ENCODE measurements at regions of chr5 and their contacts with region 1.

Region 1: DNA sequence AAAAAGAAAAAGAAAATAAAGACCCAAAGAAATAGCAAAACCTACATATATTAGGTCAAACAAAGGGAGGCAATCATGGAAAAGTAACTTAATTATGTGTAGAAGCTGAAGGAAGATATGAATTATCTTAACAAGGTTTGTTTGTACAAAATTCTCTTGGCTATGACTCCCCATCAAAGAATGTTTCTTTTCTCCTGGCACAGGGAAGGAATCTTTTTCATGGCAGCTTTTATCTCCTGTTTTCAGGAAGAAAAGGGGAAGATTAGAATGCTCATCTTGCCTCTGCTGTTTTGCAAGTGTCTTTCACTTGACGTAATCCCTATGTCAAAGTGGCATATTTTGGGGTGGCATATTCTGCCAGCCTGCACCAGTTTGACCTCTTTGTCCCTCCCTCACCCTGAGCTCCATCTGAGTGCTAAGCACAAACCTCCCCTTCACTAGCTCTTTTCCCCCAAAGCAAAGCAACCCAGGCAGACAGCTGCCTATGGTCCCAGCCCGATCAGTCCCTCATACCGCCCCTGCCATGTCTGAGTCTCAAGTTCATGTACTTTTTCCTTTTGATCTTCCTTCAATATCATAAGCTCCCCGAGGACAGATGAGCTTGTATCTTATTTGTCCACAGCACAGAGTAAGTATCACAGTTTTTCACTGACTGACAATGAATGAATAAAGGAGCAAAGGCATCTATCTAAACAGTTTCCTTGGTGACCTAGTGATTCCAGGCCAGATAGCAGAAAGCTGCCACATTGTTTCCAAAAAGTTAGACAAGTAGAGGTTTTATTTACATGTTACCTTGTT is 242.8 kb upstream of the ANKRD55 start:
- DNase-seq: peak; percentile 79
- ATAC-seq: peak; percentile 11
- H3K4me3 ChIP-seq: peak overlapping the region in 2 of 3 experiments; percentile 9 to 15; a peak in 1 of 6 replicates
- H3K27ac ChIP-seq: peak overlapping the region; percentile 54
- H3K4me1 ChIP-seq: peaks cover 67% of the 10 kb centered on the region
- H3K27me3 ChIP-seq: no peaks in the 10 kb centered on the region
- CTCF ChIP-seq: no peak
- EP300 ChIP-seq: no peak
- POLR2A ChIP-seq: no peak
- RAD21 ChIP-seq: no peak

Region 2: GRCh38 chr5:56183506-56183905 is 292.4 kb before region 1 on chr5:
- CTCF ChIA-PET with region 1: no interaction called
- POLR2A ChIA-PET with region 1: no interaction called
- in situ Hi-C with region 1: no loop called
- intact Hi-C with region 1: no loop called
- DNase-seq: peak; percentile 36
- ATAC-seq: no peak
- H3K4me3 ChIP-seq: no peak overlapping the region
- H3K27ac ChIP-seq: no peak overlapping the region
- H3K4me1 ChIP-seq: peaks cover 7% of the 10 kb centered on the region; the same call in 1 of the 2 replicates
- H3K27me3 ChIP-seq: no peaks in the 10 kb centered on the region
- CTCF ChIP-seq: no peak
- EP300 ChIP-seq: no peak
- POLR2A ChIP-seq: no peak
- RAD21 ChIP-seq: no peak

Region 3: GRCh38 chr5:56447232-56447631 is 28.7 kb before region 1 on chr5:
- CTCF ChIA-PET with region 1: no interaction called
- POLR2A ChIA-PET with region 1: interaction called, 19 read pairs
- in situ Hi-C with region 1: no loop called
- intact Hi-C with region 1: no loop called
- DNase-seq: peak; percentile 93
- ATAC-seq: peak; percentile 99
- H3K4me3 ChIP-seq: peak overlapping the region in 1 of 3 experiments; percentile 14; a peak in 1 of 6 replicates
- H3K27ac ChIP-seq: peak overlapping the region; percentile 58
- H3K4me1 ChIP-seq: peaks cover 44% of the 10 kb centered on the region
- H3K27me3 ChIP-seq: no peaks in the 10 kb centered on the region
- CTCF ChIP-seq: no peak
- EP300 ChIP-seq: peak in 1 of 2 experiments; percentile 79; a peak in 2 of 4 replicates
- POLR2A ChIP-seq: no peak
- RAD21 ChIP-seq: peak; percentile 40; the same call in 1 of the 2 replicates

Region 4: DNA sequence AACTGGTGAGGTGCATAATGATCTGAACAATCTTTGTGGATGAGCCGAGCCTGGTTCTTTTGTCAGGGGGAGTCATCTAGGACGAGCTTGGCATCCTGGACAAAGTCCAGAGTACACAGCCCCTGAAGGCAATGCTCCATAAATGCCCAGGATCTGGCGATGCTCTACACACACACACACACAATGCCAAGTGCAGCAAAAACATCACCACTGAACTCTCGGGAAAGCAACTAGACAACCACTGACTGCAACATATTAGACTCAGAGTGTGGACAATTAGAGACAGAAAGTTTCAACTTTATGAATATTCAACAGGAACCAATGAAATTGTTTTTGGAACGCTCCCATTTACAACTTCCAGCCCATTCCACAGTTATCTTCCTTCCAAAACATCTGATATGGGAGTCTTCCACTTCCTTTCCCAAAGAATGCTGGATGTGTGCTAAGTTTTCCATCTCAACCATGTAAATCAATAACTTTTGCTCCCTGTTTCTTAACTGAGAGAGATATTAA is 15.2 kb before region 1 on chr5:
- CTCF ChIA-PET with region 1: no interaction called
- POLR2A ChIA-PET with region 1: interaction called, 17 read pairs
- in situ Hi-C with region 1: no loop called
- intact Hi-C with region 1: no loop called
- DNase-seq: peak; percentile 58
- ATAC-seq: peak; percentile 51; the same call in 2 of the 3 replicates
- H3K4me3 ChIP-seq: no peak overlapping the region
- H3K27ac ChIP-seq: peak overlapping the region; percentile 32
- H3K4me1 ChIP-seq: peaks cover 49% of the 10 kb centered on the region
- H3K27me3 ChIP-seq: no peaks in the 10 kb centered on the region
- CTCF ChIP-seq: no peak
- EP300 ChIP-seq: no peak
- POLR2A ChIP-seq: no peak
- RAD21 ChIP-seq: no peak